ENCODE measurements at regions of chr10 and their contacts with region 1.

Region 1: GRCh38 chr10:91298224-91298871 is 77.9 kb downstream of the PCGF5 start:
- DNase-seq: peak; percentile 70 to 87 (median 79)
- H3K4me3 ChIP-seq: peak overlapping the region in 1 of 4 donors; percentile 56
- H3K27ac ChIP-seq: peak overlapping the region in 2 of 5 donors; percentile 46 to 49
- H3K4me1 ChIP-seq: peaks cover 0 to 11% of the 10 kb centered on the region in 2 donors
- H3K27me3 ChIP-seq: no peaks in the 10 kb centered on the region
- CTCF ChIP-seq: peak; percentile 89 to 96 (median 92)
- POLR2A ChIP-seq: no peak

Region 2: GRCh38 chr10:90969947-90970684 is 328.2 kb before region 1 on chr10:
- intact Hi-C with region 1: no loop called
- DNase-seq: no peak
- H3K4me3 ChIP-seq: no peak overlapping the region
- H3K27ac ChIP-seq: no peak overlapping the region
- H3K4me1 ChIP-seq: peaks cover 0 to 3% of the 10 kb centered on the region in 2 donors
- H3K27me3 ChIP-seq: no peaks in the 10 kb centered on the region
- CTCF ChIP-seq: peak in 1 of 6 experiments; percentile 16
- POLR2A ChIP-seq: no peak

Region 3: DNA sequence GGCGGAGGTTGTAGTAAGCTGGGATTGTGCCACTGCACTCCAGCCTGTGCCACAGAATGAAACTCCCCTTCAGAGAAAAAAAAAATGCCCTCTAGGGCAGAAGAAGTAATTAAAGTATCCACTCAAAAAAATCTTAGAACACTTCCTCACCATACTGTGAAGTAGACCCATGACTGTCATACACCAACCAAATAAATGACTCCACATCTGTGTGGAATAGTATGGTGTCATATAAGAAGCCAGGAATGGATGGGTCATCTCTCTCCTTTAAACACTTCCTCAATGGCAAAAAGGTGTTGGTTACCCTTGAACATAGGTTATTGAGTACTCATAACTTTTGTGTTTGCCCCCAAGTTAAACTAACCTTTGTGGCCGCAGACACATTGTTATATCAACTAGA is 126.0 kb before region 1 on chr10:
- intact Hi-C with region 1: no loop called
- DNase-seq: no peak
- H3K4me3 ChIP-seq: no peak overlapping the region
- H3K27ac ChIP-seq: no peak overlapping the region
- H3K4me1 ChIP-seq: no peaks in the 10 kb centered on the region
- H3K27me3 ChIP-seq: no peaks in the 10 kb centered on the region
- CTCF ChIP-seq: no peak
- POLR2A ChIP-seq: no peak

Region 4: DNA sequence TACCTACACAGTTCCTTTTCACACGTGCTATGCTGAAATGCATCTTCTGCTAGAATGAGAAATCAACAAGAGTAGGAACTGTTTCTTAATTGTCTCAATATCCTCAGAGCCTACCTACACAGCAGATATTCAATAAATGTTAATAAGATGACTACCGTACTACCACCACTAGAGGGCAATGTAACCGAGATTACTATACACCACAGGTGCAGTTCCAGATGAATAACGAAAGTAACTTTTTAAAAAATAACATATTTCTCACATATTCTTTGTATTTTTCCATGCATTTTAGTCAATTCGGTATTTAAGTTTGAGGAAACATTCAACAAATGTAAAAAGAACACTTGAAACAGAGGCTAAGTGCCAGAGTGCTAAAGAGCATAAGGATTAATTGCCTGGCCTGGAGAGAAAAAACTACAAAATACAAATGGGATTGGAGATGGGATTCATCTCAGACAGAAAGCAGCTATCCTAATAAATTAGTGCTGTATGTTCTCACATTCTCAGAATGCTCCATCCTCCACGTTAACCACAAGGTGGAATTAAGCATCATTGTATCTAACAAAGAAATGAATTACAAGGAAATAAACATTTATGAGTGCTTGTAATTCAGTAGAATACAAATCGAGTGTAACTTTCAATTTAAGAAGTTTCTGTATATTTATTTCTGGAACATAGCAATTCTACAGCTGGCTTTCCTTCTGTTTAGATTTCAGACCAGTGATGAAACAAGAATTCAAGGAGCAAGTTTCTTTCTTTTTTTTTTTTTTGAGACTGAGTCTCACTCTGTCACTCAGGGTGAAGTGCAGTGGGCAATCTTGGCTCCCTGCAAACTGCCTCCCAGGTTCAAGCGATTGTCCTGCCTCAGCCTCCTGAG is 91.5 kb after region 1 on chr10:
- intact Hi-C with region 1: loop called (anchors 10 kb)
- DNase-seq: peak in 2 of 7 donors; percentile 24 to 29
- H3K4me3 ChIP-seq: peak overlapping the region in 1 of 4 donors; percentile 12
- H3K27ac ChIP-seq: no peak overlapping the region
- H3K4me1 ChIP-seq: peaks cover 0 to 4% of the 10 kb centered on the region in 2 donors
- H3K27me3 ChIP-seq: no peaks in the 10 kb centered on the region
- CTCF ChIP-seq: peak; percentile 61 to 77 (median 66)
- POLR2A ChIP-seq: no peak

Measured in adrenal gland (tissue), 19 donors.